ENCODE measurements at regions of chr16 and their contacts with region 1.

Region 1: GRCh38 chr16:57826706-57827625 is 24.7 kb upstream of the KIFC3 start:
- DNase-seq: no peak
- H3K4me3 ChIP-seq: no peak overlapping the region
- H3K27ac ChIP-seq: no peak overlapping the region
- H3K4me1 ChIP-seq: no peaks in the 10 kb centered on the region
- H3K27me3 ChIP-seq: no peaks in the 10 kb centered on the region
- CTCF ChIP-seq: no peak
- POLR2A ChIP-seq: no peak

Region 2: DNA sequence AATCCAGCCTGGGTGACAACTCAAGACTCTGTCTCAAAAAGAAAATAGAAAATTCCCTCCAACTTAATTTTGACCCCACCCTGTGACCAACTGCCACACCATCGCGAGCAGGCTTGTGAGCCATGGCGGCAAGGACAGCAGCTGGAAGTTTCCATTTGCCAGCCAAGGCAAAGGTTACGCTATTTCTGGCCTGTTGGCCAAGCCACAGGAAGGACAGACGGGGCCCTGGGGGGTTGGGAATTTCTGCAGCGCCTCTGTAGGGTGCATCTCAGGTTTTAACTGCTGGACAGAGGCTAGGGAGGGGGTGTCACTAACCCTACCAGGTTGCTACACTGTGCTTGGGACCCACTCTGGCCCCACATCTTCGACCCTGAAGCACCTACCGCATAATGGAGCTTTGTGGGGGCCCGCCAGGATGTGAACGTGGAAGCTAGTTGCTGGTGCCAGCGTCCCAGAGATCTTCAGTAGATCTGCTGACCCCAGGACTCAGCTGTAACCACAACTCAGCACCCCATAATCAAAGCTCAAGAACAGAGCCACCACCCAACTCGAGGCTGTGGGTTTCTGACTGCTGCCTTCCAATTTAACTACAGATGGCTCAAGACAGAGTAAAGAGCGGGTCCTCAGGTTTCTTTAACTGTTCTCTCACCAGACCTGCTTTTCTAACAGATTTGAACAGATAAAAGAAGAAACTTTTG is 35.6 kb before region 1 on chr16:
- intact Hi-C with region 1: loop called (anchors 5 kb)
- DNase-seq: no peak
- H3K4me3 ChIP-seq: no peak overlapping the region
- H3K27ac ChIP-seq: no peak overlapping the region
- H3K4me1 ChIP-seq: no peaks in the 10 kb centered on the region
- H3K27me3 ChIP-seq: no peaks in the 10 kb centered on the region
- CTCF ChIP-seq: no peak
- POLR2A ChIP-seq: no peak